ENCODE measurements at regions of chr10 and their contacts with region 1.

Region 1: GRCh38 chr10:123967396-123968243 is 76.0 kb upstream of the CPXM2 start:
- DNase-seq: peak; percentile 76
- H3K4me3 ChIP-seq: no peak overlapping the region
- H3K27ac ChIP-seq: no peak overlapping the region
- H3K4me1 ChIP-seq: peaks cover 5 to 26% (median 11%) of the 10 kb centered on the region in 4 donors
- H3K27me3 ChIP-seq: peaks cover 59% of the 10 kb centered on the region
- CTCF ChIP-seq: peak; percentile 85 to 93 (median 92)
- EP300 ChIP-seq: no peak
- POLR2A ChIP-seq: no peak

Region 2: DNA sequence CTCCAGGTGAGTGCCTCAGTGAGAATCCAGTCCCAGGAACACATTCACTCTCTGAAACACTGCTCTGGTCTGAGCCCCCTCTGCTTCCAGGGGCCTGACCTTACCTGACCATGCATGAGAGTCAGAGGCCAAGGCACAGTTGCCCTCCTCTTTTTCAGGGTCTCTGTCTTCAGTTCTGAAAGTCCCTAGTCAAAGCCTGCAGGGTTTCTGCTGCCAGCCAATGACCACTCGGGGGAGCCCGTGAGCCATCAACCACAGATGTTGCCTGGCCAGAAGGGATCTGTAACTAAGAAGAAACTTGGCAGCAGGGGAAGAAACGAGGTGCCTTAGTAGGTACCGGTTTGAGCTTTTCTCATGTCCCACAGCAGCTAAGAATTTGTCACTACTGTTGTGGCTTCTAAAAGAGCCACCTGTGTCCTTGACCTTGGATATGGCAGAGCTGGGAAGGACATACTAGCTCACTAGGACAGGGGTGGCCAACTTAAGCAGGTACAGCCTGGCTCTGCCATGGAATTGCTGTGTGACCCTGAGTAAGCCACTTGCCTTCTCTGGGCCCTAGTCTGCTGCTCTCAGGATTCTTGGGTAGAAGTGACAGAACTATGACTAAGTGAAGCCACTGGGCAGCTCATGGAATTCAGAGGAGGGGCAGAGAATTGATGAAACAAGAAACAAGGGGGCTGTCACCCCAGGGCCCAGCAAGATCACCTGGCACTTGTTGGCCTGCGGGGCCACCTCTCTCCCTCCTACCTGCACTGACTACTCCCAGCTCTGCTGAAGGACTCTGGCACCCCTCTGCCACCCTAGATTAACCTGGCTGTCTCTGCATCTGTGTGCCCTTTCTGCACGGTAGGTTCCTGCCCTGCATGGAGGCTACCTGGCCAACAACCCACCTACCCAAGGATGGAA is 385.3 kb before region 1 on chr10:
- in situ Hi-C with region 1: loop called (anchors 5 kb)
- intact Hi-C with region 1: loop called (anchors 1 kb)
- DNase-seq: peak; percentile 79
- H3K4me3 ChIP-seq: no peak overlapping the region
- H3K27ac ChIP-seq: no peak overlapping the region
- H3K4me1 ChIP-seq: peaks cover 0 to 10% (median 2%) of the 10 kb centered on the region in 4 donors
- H3K27me3 ChIP-seq: peaks cover 8% of the 10 kb centered on the region
- CTCF ChIP-seq: peak; percentile 65 to 89 (median 76)
- EP300 ChIP-seq: no peak
- POLR2A ChIP-seq: no peak

Region 3: DNA sequence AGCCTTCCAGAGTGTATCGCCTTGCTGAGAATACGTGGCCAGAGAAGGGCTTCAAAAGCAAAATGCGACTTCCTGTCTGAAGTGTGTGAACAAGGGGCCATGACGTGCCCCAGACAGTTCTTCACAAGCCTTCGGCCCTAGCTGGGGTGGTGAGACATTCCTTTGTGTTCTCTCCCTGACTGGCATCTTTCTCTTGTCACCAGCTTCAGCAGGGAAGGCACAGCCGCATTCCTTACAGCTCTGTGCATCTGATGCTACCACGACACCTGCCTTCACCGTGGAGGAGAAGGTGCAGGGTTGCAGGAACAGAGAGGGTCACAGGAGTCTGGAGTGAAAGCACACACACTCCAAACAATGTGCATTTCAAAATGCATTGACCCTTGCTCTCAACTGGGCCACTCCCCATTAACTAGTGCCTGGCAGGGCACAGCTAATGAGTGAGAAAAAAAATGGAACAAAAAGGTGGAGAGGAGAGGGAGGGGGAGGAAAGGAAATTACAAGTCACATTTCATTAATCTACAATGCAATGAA is 208.1 kb before region 1 on chr10:
- in situ Hi-C with region 1: no loop called
- intact Hi-C with region 1: loop called (anchors 10 kb)
- DNase-seq: no peak
- H3K4me3 ChIP-seq: no peak overlapping the region
- H3K27ac ChIP-seq: no peak overlapping the region
- H3K4me1 ChIP-seq: peaks cover 0 to 9% (median 4%) of the 10 kb centered on the region in 4 donors
- H3K27me3 ChIP-seq: no peaks in the 10 kb centered on the region
- CTCF ChIP-seq: no peak
- EP300 ChIP-seq: no peak
- POLR2A ChIP-seq: no peak

Region 4: GRCh38 chr10:123868038-123869019 is 99.3 kb before region 1 on chr10:
- in situ Hi-C with region 1: no loop called
- intact Hi-C with region 1: loop called (anchors 5 kb)
- DNase-seq: no peak
- H3K4me3 ChIP-seq: no peak overlapping the region
- H3K27ac ChIP-seq: peak overlapping the region; percentile 81 to 87 (median 84)
- H3K4me1 ChIP-seq: peaks cover 3 to 17% (median 5%) of the 10 kb centered on the region in 4 donors
- H3K27me3 ChIP-seq: no peaks in the 10 kb centered on the region
- CTCF ChIP-seq: no peak
- EP300 ChIP-seq: no peak
- POLR2A ChIP-seq: no peak

Measured in transverse colon (tissue), 4 donors.